ENCODE measurements at regions of chr5 and their contacts with region 1.

Region 1: DNA sequence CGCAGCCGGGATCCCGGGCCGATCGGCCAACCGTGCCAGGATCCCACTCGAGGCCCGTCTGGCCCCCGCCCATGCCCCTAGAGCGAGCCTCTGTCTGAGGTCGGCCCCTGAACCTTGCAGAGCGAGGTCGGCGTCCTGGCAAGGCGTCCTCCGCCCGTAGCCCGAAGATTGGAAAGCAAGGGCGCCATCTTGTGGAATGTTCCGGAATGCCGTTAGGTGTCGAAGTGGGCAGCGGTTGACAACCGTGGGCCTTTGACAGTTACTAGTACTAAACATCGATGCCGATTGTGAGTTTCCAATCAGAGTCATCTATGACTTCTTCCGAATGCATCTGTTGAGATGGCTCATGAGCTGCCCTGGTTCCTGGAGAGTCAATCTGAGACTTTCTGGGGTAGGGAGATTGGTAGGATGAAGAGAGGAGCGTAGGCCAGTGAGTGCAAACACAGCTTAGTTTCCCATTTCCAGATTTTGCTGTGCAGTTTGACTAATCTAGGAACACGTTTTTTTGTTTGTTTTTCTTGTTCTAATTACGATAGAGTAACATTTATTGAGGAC is 923 bp upstream of the PLK2 start:
- DNase-seq: peak; percentile 85 to 92 (median 90)
- H3K4me3 ChIP-seq: peak overlapping the region; percentile 68 to 89 (median 79)
- H3K27ac ChIP-seq: no peak overlapping the region
- H3K4me1 ChIP-seq: peaks cover 2 to 23% (median 15%) of the 10 kb centered on the region in 4 experiments
- H3K27me3 ChIP-seq: no peaks in the 10 kb centered on the region

Region 2: GRCh38 chr5:57298295-57298984 is 1162.4 kb before region 1 on chr5:
- CTCF ChIA-PET with region 1: interaction called, 52 read pairs
- POLR2A ChIA-PET with region 1: interaction called, 5 read pairs
- DNase-seq: peak; percentile 86 to 93 (median 87)
- H3K4me3 ChIP-seq: peak overlapping the region in 4 of 7 experiments; percentile 41 to 57 (median 54)
- H3K27ac ChIP-seq: no peak overlapping the region
- H3K4me1 ChIP-seq: peaks cover 6 to 14% (median 8%) of the 10 kb centered on the region in 4 experiments
- H3K27me3 ChIP-seq: no peaks in the 10 kb centered on the region

Region 3: GRCh38 chr5:57499262-57500050 is 961.4 kb before region 1 on chr5:
- CTCF ChIA-PET with region 1: interaction called, 97 read pairs
- POLR2A ChIA-PET with region 1: interaction called, 3 read pairs
- DNase-seq: peak; percentile 49 to 77 (median 64)
- H3K4me3 ChIP-seq: peak overlapping the region in 4 of 7 experiments; percentile 8 to 62 (median 28)
- H3K27ac ChIP-seq: no peak overlapping the region
- H3K4me1 ChIP-seq: peaks cover 20 to 75% (median 52%) of the 10 kb centered on the region in 4 experiments
- H3K27me3 ChIP-seq: no peaks in the 10 kb centered on the region

Region 4: DNA sequence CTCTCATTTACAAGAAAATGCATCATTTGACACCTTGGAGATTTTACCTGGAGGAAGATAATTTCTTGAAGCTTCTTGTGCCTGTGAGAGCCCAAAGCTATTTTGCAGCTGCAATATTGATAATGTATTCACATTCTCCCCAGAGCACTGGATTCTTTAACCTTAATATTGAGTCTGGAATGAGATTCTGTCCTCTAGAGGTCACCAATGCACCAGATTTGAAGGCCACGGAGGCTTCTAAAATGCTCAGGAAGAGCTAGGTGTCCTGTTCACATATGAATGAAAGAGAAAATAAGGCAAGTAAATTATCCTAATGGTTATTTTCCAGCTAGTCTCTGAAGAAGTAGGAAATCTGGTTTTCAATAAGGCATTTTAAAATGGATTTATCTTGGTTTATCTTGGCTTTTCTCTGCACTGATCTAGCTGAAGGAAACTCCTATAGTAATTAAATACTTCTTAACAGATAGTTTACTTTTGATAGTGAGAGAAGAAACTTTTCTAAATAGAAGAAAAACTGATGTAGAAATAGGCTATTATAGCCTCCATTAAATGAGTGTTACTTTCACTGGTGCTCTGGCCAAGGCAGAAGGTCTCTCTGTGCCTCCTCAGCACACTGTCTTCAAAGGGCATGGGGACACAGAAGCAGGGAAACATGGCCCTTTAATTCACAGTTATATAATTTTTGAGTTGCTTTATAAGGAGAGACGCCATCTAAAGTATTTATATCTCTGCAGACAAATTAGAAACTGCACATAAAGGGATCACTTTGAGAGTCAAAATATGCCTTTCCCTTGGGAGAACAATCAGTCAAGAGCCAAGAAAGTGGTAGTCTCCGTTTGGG is 681.2 kb before region 1 on chr5:
- CTCF ChIA-PET with region 1: interaction called, 157 read pairs
- POLR2A ChIA-PET with region 1: no interaction called
- DNase-seq: peak; percentile 56 to 69 (median 57)
- H3K4me3 ChIP-seq: no peak overlapping the region
- H3K27ac ChIP-seq: no peak overlapping the region
- H3K4me1 ChIP-seq: no peaks in the 10 kb centered on the region
- H3K27me3 ChIP-seq: peaks cover 0 to 2% (median 0%) of the 10 kb centered on the region in 5 experiments

Region 5: GRCh38 chr5:57887851-57888621 is 572.8 kb before region 1 on chr5:
- CTCF ChIA-PET with region 1: interaction called, 80 read pairs
- POLR2A ChIA-PET with region 1: interaction called, 3 read pairs
- DNase-seq: peak; percentile 52 to 69 (median 69)
- H3K4me3 ChIP-seq: no peak overlapping the region
- H3K27ac ChIP-seq: no peak overlapping the region
- H3K4me1 ChIP-seq: peaks cover 0 to 3% (median 0%) of the 10 kb centered on the region in 4 experiments
- H3K27me3 ChIP-seq: no peaks in the 10 kb centered on the region

Region 6: DNA sequence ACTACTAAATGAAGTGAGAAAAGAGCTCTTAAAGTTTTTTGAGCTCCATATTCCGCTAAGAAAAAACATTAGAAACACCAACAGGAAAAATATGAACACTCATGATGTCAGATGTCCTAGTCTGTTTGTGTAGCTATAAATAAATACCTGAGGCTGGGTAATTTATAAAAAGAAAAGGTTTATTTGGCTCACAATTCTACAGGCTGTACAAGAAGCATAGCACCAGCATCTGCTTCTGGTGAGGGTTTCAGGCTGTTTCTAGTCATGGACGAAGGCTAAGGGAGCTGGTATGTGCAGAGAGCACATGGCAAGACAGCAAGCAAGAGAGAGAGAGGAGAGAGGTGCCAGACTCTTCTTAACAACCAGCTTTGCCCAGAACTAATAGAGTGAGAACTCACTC is 187.1 kb before region 1 on chr5:
- CTCF ChIA-PET with region 1: interaction called, 23 read pairs
- POLR2A ChIA-PET with region 1: interaction called, 4 read pairs
- DNase-seq: no peak
- H3K4me3 ChIP-seq: no peak overlapping the region
- H3K27ac ChIP-seq: no peak overlapping the region
- H3K4me1 ChIP-seq: peaks cover 3 to 21% (median 6%) of the 10 kb centered on the region in 4 experiments
- H3K27me3 ChIP-seq: no peaks in the 10 kb centered on the region

Region 7: GRCh38 chr5:58366461-58366860 is 94.3 kb before region 1 on chr5:
- CTCF ChIA-PET with region 1: no interaction called
- POLR2A ChIA-PET with region 1: no interaction called
- DNase-seq: no peak
- H3K4me3 ChIP-seq: no peak overlapping the region
- H3K27ac ChIP-seq: no peak overlapping the region
- H3K4me1 ChIP-seq: no peaks in the 10 kb centered on the region
- H3K27me3 ChIP-seq: no peaks in the 10 kb centered on the region

Region 8: GRCh38 chr5:58545912-58546311 is 85.1 kb after region 1 on chr5:
- CTCF ChIA-PET with region 1: no interaction called
- POLR2A ChIA-PET with region 1: no interaction called
- DNase-seq: peak; percentile 17 to 77 (median 70)
- H3K4me3 ChIP-seq: no peak overlapping the region
- H3K27ac ChIP-seq: no peak overlapping the region
- H3K4me1 ChIP-seq: peaks cover 9 to 35% (median 33%) of the 10 kb centered on the region in 4 experiments
- H3K27me3 ChIP-seq: no peaks in the 10 kb centered on the region

Measured in common myeloid progenitor, CD34-positive (primary cell).